ENCODE measurements at regions of chr19 and their contacts with region 1.

Region 1: GRCh38 chr19:54517483-54517882 is 14.9 kb downstream of the LAIR2 start:
- DNase-seq: peak; percentile 92
- H3K4me3 Mint-ChIP-seq: no peak overlapping the region
- H3K27ac Mint-ChIP-seq: peak overlapping the region; percentile 62
- H3K4me1 Mint-ChIP-seq: peaks cover 42% of the 10 kb centered on the region
- H3K27me3 Mint-ChIP-seq: peaks cover 3% of the 10 kb centered on the region

Region 2: DNA sequence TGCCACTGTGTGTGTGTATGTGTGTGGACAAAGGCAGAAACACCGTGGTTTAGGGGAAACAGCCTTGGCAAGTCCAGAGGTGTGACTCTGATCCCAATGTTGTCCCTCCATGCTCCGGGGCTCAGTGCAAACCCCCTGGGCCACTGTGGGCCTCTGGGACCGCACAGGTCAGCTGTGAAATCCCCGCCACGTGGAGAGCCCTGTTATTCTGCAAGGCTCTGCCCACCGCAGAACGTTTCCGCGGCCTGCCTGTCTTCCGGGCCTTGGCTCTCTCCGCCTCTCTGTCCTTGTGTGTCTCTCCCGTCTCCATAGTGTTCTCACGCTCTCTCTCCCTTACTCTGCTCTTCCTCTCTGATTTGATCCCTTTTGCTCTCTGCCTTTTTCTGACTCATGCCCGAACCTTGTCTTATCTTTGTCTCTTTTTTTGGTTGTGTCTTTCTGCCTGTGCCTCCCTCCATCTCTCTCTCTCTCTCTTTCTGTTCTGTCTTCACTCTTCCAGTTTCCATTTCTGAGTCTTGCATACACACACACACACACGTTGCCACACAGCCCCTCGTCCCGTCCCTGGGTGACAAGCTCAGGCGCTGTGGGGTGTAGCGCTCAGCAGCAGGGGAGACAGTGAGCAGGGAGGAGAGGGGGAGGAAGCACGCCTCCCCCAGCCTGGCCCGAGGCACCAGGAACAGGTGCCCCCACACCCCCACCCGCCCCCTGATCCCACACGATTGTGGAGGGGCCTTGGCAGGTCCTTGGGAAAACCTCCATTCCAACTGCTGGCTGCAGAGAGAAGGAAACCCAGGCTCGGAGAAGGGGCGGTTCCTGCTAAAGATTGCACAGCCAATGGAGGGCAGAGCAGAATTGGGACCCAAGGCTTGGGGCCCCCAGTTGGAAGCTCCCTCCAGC is 99.2 kb before region 1 on chr19:
- intact Hi-C with region 1: no loop called
- DNase-seq: peak; percentile 85
- H3K4me3 Mint-ChIP-seq: peak overlapping the region; percentile 57
- H3K27ac Mint-ChIP-seq: peak overlapping the region; percentile 84
- H3K4me1 Mint-ChIP-seq: peaks cover 13% of the 10 kb centered on the region
- H3K27me3 Mint-ChIP-seq: peaks cover 27% of the 10 kb centered on the region

Region 3: GRCh38 chr19:54502518-54503048 is 14.9 kb before region 1 on chr19 and contains the start of gene LAIR2:
- intact Hi-C with region 1: loop called (anchors 2 kb)
- DNase-seq: peak; percentile 71
- H3K4me3 Mint-ChIP-seq: peak within 1 kb of the TSS; percentile 75
- H3K27ac Mint-ChIP-seq: peak within 1 kb of the TSS; percentile 75
- H3K4me1 Mint-ChIP-seq: peaks cover 27% of the 10 kb centered on the region
- H3K27me3 Mint-ChIP-seq: peaks cover 6% of the 10 kb centered on the region
- total RNA-seq, gene LAIR2: 34.2 and 35.0 TPM in 2 replicates

Region 4: GRCh38 chr19:54532528-54532927 is 15.0 kb after region 1 on chr19:
- intact Hi-C with region 1: loop called (anchors 2 kb)
- DNase-seq: peak; percentile 70
- H3K4me3 Mint-ChIP-seq: peak overlapping the region; percentile 74
- H3K27ac Mint-ChIP-seq: peak overlapping the region; percentile 73
- H3K4me1 Mint-ChIP-seq: peaks cover 38% of the 10 kb centered on the region
- H3K27me3 Mint-ChIP-seq: peaks cover 15% of the 10 kb centered on the region